A673 (cell line): ENCODE measurements at regions of chr16 and their contacts with region 1.

Region 1: GRCh38 chr16:47141773-47142485 is 1.8 kb downstream of the NETO2 start:
- DNase-seq: peak; percentile 92
- H3K4me3 ChIP-seq: peak overlapping the region; percentile 63
- H3K27ac ChIP-seq: no peak overlapping the region
- H3K4me1 ChIP-seq: peaks cover 4% of the 10 kb centered on the region
- H3K27me3 ChIP-seq: peaks cover 15% of the 10 kb centered on the region
- CTCF ChIP-seq: peak; percentile 97

Region 2: DNA sequence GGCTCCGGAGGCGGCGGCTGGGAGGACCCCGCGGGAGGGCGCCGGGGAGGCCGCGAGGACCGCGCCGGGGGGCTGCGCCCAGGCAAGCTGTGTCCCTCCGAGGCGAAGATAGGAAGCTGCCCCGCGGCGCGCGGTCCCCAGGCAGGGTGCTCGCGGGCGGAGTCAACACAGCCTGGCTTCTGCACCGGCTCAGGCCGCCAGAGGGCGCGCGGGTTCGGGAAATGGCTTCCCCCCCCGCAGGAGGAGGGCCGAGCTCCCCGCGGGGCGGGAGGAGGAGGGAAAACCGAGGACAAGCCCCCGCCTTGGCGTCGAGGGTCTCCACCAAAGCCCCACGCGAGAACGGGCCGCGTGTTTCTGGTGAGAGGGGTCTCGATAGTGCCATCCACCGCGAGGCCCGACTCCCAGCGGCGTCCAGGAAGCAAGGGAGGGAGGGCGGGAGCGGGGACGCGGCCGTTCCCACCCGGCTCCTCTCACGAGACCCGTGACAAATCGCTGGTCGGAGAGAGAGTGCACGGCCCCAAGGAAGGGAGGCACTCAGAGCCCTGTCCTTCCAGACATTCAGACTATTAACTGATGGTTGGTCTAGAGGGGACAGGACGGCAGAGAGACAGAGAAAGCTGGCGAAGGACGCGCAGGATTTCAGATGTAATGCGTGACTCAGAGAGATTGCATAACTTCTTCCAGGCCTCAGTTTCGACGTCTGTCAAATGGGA is 104.0 kb before region 1 on chr16:
- CTCF ChIA-PET with region 1: interaction called, 6 read pairs
- POLR2A ChIA-PET with region 1: no interaction called
- intact Hi-C with region 1: loop called (anchors 2 kb)
- DNase-seq: peak; percentile 88
- H3K4me3 ChIP-seq: peak overlapping the region; percentile 57
- H3K27ac ChIP-seq: no peak overlapping the region
- H3K4me1 ChIP-seq: peaks cover 4% of the 10 kb centered on the region
- H3K27me3 ChIP-seq: no peaks in the 10 kb centered on the region
- CTCF ChIP-seq: peak; percentile 92

Region 3: DNA sequence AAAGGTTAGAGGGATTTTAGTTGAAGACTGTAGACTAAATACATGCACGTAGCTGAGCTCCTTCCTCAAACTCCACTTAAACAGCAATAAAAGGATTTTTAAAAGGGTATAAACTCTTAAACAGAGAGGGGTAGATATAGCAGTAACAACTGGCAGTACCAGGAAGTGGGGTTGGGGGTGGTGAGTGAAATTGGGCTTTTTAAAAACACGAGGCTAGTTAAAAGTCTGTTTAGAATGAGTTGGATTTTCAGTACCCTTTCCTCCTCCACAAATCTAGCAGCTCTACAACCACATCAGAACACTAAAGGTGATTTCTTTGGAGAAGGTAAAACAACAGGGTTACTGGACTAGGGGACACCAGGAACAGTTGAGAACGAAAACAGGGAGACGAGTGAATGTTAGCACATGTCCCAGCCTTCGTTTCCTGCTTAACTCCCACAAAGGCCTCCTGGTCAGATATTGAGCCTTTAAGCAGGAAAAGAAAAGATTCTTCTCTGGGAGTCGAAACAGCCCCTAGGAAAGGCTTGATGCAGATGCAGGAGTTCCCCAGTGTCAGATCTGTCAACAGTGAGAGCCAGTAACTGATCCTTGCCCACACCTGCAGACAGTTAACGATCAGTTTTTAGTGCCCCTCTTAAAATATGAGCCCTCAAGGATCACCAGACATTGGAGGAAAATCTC is 12.0 kb before region 1 on chr16:
- CTCF ChIA-PET with region 1: no interaction called
- POLR2A ChIA-PET with region 1: no interaction called
- intact Hi-C with region 1: no loop called
- DNase-seq: no peak
- H3K4me3 ChIP-seq: no peak overlapping the region
- H3K27ac ChIP-seq: no peak overlapping the region
- H3K4me1 ChIP-seq: peaks cover 3% of the 10 kb centered on the region
- H3K27me3 ChIP-seq: no peaks in the 10 kb centered on the region
- CTCF ChIP-seq: no peak

Region 4: GRCh38 chr16:47460711-47461597 is 319.0 kb after region 1 on chr16 and contains the starts of genes ITFG1 and PHKB:
- CTCF ChIA-PET with region 1: no interaction called
- POLR2A ChIA-PET with region 1: no interaction called
- intact Hi-C with region 1: loop called (anchors 10 kb)
- DNase-seq: peak; percentile 97
- H3K4me3 ChIP-seq: peak within 1 kb of the TSS; percentile 78
- H3K27ac ChIP-seq: peak within 1 kb of the TSS; percentile 97
- H3K4me1 ChIP-seq: peaks cover 24% of the 10 kb centered on the region
- H3K27me3 ChIP-seq: no peaks in the 10 kb centered on the region
- CTCF ChIP-seq: no peak
- total RNA-seq, gene ITFG1: 39.6 and 40.1 TPM in 2 replicates
- total RNA-seq, gene PHKB: 50.6 and 62.4 TPM in 2 replicates

Region 5: DNA sequence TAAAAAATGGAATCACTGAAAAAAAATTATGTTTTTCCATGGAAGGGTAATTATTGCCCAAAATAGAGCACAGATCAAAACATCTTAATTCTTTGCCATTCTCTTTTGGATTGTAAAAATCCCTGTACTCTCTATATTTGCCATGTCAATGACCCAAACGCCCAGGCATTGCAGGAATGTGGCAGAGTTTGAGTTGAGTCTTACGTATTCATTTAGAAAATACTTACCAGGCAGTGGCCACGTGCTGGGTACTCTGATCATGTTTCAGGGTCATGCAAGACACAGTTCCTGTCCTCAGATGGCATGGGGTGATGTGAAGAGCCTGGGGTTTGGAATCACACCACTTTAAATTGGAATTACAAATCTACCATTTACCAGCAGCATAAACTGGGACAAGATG is 746.2 kb after region 1 on chr16:
- CTCF ChIA-PET with region 1: no interaction called
- POLR2A ChIA-PET with region 1: no interaction called
- intact Hi-C with region 1: loop called (anchors 10 kb)
- DNase-seq: peak; percentile 17
- H3K4me3 ChIP-seq: no peak overlapping the region
- H3K27ac ChIP-seq: no peak overlapping the region
- H3K4me1 ChIP-seq: peaks cover 19% of the 10 kb centered on the region
- H3K27me3 ChIP-seq: peaks cover 24% of the 10 kb centered on the region
- CTCF ChIP-seq: no peak

Region 6: DNA sequence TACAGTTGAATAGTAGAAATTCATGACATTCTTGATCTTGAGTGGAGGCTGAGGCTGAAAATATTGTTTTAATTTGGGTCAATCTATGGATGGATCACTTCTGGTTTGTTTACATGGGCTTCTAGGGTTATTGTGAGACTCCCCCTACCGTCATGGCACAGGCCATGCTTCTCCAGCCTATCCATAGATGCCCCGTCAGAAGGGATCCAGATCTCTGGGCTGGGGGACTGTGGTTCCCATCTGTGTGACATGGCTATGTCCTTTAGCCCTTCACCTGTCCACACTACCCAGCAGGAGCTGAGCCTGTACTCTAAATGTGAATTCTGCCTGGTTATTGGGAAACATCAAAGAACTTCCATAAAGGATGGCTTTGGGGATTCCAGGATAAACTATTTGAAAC is 853.4 kb after region 1 on chr16:
- CTCF ChIA-PET with region 1: no interaction called
- POLR2A ChIA-PET with region 1: no interaction called
- intact Hi-C with region 1: no loop called
- DNase-seq: no peak
- H3K4me3 ChIP-seq: no peak overlapping the region
- H3K27ac ChIP-seq: no peak overlapping the region
- H3K4me1 ChIP-seq: no peaks in the 10 kb centered on the region
- H3K27me3 ChIP-seq: peaks cover 4% of the 10 kb centered on the region
- CTCF ChIP-seq: peak; percentile 24; the same call in 1 of the 2 replicates

Region 7: GRCh38 chr16:48054881-48055601 is 913.1 kb after region 1 on chr16:
- CTCF ChIA-PET with region 1: interaction called, 8 read pairs
- POLR2A ChIA-PET with region 1: no interaction called
- intact Hi-C with region 1: loop called (anchors 2 kb)
- DNase-seq: peak; percentile 64
- H3K4me3 ChIP-seq: no peak overlapping the region
- H3K27ac ChIP-seq: no peak overlapping the region
- H3K4me1 ChIP-seq: no peaks in the 10 kb centered on the region
- H3K27me3 ChIP-seq: peaks cover 42% of the 10 kb centered on the region
- CTCF ChIP-seq: peak; percentile 91

Region 8: GRCh38 chr16:48117217-48118105 is 975.5 kb after region 1 on chr16:
- CTCF ChIA-PET with region 1: interaction called, 3 read pairs
- POLR2A ChIA-PET with region 1: no interaction called
- intact Hi-C with region 1: loop called (anchors 5 kb)
- DNase-seq: peak; percentile 83
- H3K4me3 ChIP-seq: no peak overlapping the region
- H3K27ac ChIP-seq: no peak overlapping the region
- H3K4me1 ChIP-seq: no peaks in the 10 kb centered on the region
- H3K27me3 ChIP-seq: no peaks in the 10 kb centered on the region
- CTCF ChIP-seq: peak; percentile 93

Region 9: GRCh38 chr16:48156790-48157209 is 1014.9 kb after region 1 on chr16:
- CTCF ChIA-PET with region 1: no interaction called
- POLR2A ChIA-PET with region 1: no interaction called
- intact Hi-C with region 1: loop called (anchors 2 kb)
- DNase-seq: peak; percentile 82
- H3K4me3 ChIP-seq: no peak overlapping the region
- H3K27ac ChIP-seq: no peak overlapping the region
- H3K4me1 ChIP-seq: no peaks in the 10 kb centered on the region
- H3K27me3 ChIP-seq: no peaks in the 10 kb centered on the region
- CTCF ChIP-seq: peak; percentile 91